Panc1 (cell line): ENCODE measurements at regions of chr16 and their contacts with region 1.

Region 1: DNA sequence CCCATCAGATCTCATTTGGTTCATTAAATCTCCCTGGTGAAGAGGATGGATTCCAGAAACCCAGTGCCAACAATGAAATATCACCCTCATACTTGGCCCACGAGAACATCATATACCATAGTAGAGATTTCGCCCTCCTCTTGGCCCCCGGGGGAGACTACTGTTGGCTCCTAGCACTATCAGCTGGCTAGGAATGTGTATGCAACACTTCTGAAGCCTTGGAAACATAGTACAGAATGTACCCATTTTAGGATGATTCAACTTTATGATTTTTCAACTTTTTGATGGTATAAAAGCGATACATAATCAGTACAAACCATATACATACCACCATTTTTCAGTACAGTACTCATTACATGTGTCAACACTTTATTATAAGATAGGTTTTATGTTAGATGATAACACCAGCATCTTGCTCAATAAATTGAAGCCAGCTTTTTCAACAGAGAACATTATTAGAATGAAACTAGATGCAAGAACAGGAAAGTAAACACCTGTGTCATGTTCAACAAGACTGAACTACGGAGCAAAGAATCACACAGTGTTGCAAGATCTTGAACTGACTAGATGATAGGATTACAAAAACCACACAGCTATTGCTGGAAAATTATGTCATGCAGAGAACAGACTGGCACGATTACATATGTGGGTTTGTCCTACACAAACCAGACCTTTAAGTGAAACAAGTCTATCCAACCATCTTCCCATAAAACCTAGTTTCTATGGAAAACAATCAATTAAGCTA is 17.2 kb downstream of the RSL1D1 start:
- DNase-seq: no peak
- ATAC-seq: no peak
- H3K4me3 ChIP-seq: no peak overlapping the region
- H3K27ac ChIP-seq: no peak overlapping the region
- H3K4me1 ChIP-seq: peaks cover 6% of the 10 kb centered on the region; the same call in 1 of the 2 replicates
- H3K27me3 ChIP-seq: no peaks in the 10 kb centered on the region
- CTCF ChIP-seq: no peak

Region 2: GRCh38 chr16:11510178-11510973 is 323.7 kb before region 1 on chr16:
- CTCF ChIA-PET with region 1: no interaction called
- POLR2A ChIA-PET with region 1: interaction called, 11 read pairs
- in situ Hi-C with region 1: no loop called
- intact Hi-C with region 1: no loop called
- DNase-seq: no peak
- ATAC-seq: no peak
- H3K4me3 ChIP-seq: no peak overlapping the region
- H3K27ac ChIP-seq: no peak overlapping the region
- H3K4me1 ChIP-seq: no peaks in the 10 kb centered on the region
- H3K27me3 ChIP-seq: no peaks in the 10 kb centered on the region
- CTCF ChIP-seq: no peak

Region 3: GRCh38 chr16:11792410-11793241 is 41.5 kb before region 1 on chr16:
- CTCF ChIA-PET with region 1: no interaction called
- POLR2A ChIA-PET with region 1: no interaction called
- in situ Hi-C with region 1: no loop called
- intact Hi-C with region 1: loop called (anchors 5 kb)
- DNase-seq: no peak
- ATAC-seq: no peak
- H3K4me3 ChIP-seq: no peak overlapping the region
- H3K27ac ChIP-seq: no peak overlapping the region
- H3K4me1 ChIP-seq: peaks cover 35% of the 10 kb centered on the region
- H3K27me3 ChIP-seq: no peaks in the 10 kb centered on the region
- CTCF ChIP-seq: no peak